GM10248 (cell line): ENCODE measurements at regions of chr18 and their contacts with region 1.

Region 1: DNA sequence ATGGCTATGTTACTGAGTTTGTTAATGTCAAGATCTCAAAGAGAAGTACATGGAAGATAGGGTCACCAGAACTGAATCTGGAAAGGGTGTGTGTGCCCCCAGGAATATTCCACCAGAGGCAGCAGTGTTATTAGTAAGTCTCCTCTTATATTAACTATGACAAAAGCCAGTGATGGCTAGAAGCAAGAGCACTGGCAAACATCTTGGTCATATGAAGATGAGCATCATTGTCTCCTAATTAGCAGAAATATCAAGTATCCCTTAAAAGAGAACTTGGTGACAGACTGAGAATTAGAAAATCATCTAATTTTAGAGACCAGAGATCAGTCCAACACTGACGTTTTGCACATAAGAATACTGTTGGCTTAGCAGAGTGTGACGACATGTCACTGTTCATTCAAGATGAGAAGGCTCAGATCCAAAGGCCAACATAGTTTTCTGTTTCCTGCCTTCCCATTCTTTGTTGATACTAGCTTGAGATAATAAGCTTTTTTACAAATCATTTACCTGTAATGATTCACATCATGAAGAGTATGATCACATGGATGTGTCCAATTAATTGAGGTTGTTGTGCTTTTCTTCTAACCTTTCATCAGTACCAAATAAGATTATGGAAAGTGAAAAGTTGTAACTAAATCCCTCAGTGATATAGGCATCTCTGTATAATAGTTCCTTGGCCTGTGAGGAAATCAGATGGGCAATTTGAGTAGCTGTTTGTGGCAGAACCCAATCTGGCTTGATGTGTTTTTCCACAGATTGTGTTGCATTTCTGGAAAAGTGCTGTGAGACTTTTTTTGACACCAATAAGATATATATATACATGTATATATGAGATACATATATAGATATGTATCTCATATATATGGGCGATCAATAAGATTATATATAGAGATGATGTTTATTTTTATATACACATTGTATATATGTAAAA is 44.5 kb downstream of the MAPRE2 start:
- DNase-seq: no peak
- CTCF ChIP-seq: no peak

Region 2: GRCh38 chr18:35073186-35074105 is 12.3 kb before region 1 on chr18:
- CTCF ChIA-PET with region 1: interaction called, 11 read pairs
- POLR2A ChIA-PET with region 1: no interaction called
- DNase-seq: no peak
- CTCF ChIP-seq: no peak

Region 3: GRCh38 chr18:35106013-35106844 is 20.5 kb after region 1 on chr18:
- CTCF ChIA-PET with region 1: no interaction called
- POLR2A ChIA-PET with region 1: no interaction called
- DNase-seq: no peak
- CTCF ChIP-seq: no peak